ENCODE measurements at regions of chr5 and their contacts with region 1.

Region 1: DNA sequence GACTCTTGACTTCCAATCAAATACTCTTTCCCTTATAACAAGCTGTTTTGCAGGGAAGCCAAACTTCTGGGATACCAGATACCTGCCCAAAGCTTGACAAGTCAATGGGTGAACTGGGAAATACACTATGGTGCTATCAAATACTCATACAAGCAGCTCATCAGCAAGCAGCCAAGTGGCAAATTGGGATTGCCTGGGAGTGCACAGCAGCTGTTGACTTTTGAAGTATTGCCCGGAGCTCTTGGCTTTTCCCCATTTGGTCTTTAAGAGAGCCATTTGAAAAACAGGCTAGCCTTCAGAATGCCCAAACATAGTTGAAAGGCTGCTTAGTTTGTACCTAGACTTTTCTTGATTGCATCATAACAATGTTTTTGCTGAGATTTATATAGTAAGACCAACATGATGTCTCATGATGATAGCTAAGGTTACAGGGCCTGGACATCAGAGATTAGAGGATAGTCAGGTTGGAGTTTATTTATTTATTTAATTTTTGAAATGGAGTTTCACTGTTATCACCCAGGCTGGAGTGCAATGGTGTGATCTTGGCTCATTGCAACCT is 210.1 kb upstream of the ZNF608 start:
- DNase-seq: no peak
- H3K4me3 ChIP-seq: no peak overlapping the region
- H3K27ac ChIP-seq: no peak overlapping the region
- H3K4me1 ChIP-seq: no peaks in the 10 kb centered on the region
- H3K27me3 ChIP-seq: no peaks in the 10 kb centered on the region
- CTCF ChIP-seq: no peak
- EP300 ChIP-seq: no peak
- POLR2A ChIP-seq: no peak
- RAD21 ChIP-seq: no peak

Region 2: GRCh38 chr5:124941393-124942049 is 15.0 kb before region 1 on chr5:
- CTCF ChIA-PET with region 1: no interaction called
- POLR2A ChIA-PET with region 1: no interaction called
- DNase-seq: no peak
- H3K4me3 ChIP-seq: no peak overlapping the region
- H3K27ac ChIP-seq: no peak overlapping the region
- H3K4me1 ChIP-seq: no peaks in the 10 kb centered on the region
- H3K27me3 ChIP-seq: no peaks in the 10 kb centered on the region
- CTCF ChIP-seq: no peak
- EP300 ChIP-seq: no peak
- POLR2A ChIP-seq: no peak
- RAD21 ChIP-seq: no peak

Region 3: DNA sequence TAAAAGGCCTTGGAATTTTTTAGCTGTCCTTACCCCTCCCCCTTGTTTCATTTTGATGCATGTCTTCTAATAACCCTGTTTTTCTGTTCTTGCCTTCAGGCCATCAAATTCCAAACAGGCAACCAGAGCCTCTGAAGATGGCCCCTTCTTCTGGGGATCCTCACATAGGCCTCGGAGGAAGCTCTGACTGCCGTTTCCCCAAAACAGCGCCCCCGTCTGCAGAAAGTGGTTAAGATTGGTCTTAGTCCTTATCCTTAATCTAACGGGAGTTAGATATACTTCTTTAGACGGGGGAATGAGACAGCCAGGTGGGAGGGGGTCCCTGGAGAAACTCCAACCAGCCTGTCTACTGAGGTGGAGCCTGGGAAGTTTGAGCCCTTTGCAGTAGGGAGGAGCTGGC is 16.2 kb after region 1 on chr5:
- CTCF ChIA-PET with region 1: interaction called, 10 read pairs
- POLR2A ChIA-PET with region 1: no interaction called
- DNase-seq: peak in 1 of 2 experiments; percentile 60
- H3K4me3 ChIP-seq: no peak overlapping the region
- H3K27ac ChIP-seq: no peak overlapping the region
- H3K4me1 ChIP-seq: peaks cover 0 to 5% (median 0%) of the 10 kb centered on the region in 4 experiments; a peak in 3 of 7 replicates
- H3K27me3 ChIP-seq: no peaks in the 10 kb centered on the region
- CTCF ChIP-seq: peak in 2 of 3 experiments; percentile 32 to 53; a peak in 3 of 4 replicates
- EP300 ChIP-seq: no peak
- POLR2A ChIP-seq: no peak
- RAD21 ChIP-seq: peak; percentile 31 to 51